AG04449 (cell line): ENCODE measurements at regions of chr12 and their contacts with region 1.

Region 1: DNA sequence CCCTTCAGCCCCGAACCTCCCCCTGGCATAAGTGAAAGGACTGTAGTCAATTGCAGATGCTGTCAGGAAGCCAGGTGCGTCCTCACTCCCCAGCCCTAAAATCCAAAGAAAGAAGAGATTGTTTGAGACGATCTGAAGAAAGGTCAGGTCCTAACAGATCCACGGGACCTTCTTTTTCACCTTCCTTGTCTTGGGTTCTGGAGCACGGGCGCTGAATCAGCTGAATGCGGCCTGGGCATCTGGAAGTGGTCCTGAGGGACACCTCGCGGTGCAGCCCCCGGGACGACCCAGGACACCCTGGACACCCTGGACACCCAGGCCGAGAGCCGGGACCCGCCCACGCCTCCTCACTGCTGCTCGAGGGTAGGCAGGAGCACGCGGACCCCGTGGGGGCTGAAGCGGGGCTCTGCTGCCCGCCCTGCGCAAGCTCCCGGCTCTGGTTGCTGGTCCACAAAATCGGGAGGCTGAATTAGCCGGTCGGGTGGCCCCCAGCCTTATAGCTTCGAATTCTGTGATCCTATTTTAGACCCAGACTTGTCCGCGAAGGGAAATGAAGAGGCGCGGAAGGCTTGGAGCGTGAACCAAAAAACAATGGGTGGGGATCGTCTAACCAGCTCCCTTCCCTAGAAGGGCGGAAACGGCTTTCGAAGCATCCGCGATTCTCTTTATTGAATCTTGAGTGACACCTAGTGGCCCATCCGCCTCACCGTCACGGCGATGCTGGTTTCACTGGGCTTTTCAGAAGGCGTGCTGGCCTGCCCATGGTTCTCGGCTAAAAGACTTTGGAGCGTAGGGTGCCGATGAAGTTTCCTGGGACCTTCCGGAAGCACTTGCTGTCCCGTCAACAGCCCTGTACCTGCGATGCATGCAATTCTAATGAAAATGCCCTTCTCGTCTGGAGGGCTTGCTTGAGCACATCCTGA is 46.4 kb upstream of the PLXNC1 start:
- DNase-seq: no peak
- H3K4me3 ChIP-seq: peak overlapping the region; percentile 68
- CTCF ChIP-seq: peak; percentile 86

Region 2: DNA sequence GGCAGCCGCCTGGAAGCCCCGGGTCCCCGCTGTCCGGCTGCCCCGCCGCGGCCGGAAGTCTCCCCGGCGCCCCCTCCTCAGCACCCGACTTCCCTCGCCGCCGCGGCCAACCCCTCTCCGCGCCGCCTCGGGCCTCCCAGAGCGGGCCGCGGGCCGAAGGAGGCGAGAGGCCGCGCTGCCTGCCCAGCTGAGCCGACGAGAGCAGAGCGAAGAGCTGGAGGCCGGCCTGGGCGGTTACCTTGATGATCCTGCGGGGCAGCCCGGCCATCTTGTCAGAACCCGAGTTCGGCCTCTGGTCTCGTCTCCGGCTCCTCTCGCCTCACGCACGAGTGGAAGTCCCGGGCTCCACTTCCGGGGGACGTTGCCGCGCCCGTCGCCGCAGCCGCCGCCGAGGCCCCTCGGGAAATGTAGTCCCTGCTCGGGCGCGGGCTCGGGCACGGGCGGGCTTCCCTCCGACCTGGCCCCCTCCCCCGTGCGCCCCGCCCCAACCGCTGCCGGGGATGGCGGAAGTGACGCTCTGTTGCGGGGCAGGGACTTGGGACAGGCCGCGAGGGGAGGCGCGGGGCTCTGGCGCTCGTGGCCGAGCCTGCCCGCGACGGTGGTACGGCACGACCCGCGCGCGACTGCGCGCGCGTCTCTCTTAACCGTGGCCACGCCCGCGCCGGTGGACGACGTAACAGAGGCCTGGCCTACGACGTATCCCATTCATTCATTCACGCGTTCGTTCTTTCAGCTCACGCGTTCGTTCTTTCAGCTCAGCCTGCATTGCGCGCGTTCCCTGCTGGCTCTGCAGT is 660.2 kb before region 1 on chr12 and contains the start of gene UBE2N:
- CTCF ChIA-PET with region 1: interaction called, 18 read pairs
- POLR2A ChIA-PET with region 1: no interaction called
- DNase-seq: peak; percentile 47
- H3K4me3 ChIP-seq: peak within 1 kb of the TSS; percentile 79
- CTCF ChIP-seq: no peak

Region 3: GRCh38 chr12:93569656-93570551 is 532.1 kb before region 1 on chr12:
- CTCF ChIA-PET with region 1: interaction called, 199 read pairs
- POLR2A ChIA-PET with region 1: interaction called, 5 read pairs
- DNase-seq: no peak
- H3K4me3 ChIP-seq: peak overlapping the region; percentile 67
- CTCF ChIP-seq: peak; percentile 89

Region 4: DNA sequence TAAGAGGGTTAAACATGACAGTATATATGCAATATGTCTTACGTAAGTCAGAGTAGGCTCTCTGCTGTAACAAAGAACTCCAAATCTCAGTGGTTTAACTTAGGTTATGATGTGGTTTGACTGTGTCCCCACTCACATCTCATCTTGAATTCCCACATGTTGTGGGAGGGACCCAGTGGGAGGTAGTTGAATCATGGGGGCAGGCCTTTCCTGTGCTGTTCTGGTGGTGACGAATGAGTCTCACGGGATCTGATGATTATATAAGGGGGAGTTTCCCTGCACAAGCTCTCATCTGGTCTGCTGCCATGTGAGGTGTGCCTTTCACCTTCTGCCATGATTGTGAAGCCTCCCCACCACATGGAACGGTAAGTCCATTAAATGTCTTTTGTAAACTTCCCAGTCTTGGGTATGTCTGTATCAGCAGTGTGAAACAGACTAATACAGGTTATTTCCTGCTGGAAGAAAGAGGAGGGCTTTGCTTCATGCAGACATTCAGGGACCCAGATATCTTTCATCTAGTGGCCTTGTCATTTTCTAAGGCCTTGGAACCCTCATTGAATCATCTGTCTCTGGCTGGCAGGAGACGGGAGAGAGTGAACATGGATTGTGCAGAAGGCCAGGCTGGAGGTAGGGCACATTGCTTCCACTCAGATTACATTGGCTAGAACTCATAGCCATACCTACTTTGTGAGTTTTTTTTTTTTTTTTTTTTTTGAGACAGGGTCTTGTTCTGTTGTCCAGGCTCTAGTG is 328.7 kb before region 1 on chr12:
- CTCF ChIA-PET with region 1: interaction called, 326 read pairs
- POLR2A ChIA-PET with region 1: no interaction called
- DNase-seq: no peak
- H3K4me3 ChIP-seq: no peak overlapping the region
- CTCF ChIP-seq: no peak

Region 5: DNA sequence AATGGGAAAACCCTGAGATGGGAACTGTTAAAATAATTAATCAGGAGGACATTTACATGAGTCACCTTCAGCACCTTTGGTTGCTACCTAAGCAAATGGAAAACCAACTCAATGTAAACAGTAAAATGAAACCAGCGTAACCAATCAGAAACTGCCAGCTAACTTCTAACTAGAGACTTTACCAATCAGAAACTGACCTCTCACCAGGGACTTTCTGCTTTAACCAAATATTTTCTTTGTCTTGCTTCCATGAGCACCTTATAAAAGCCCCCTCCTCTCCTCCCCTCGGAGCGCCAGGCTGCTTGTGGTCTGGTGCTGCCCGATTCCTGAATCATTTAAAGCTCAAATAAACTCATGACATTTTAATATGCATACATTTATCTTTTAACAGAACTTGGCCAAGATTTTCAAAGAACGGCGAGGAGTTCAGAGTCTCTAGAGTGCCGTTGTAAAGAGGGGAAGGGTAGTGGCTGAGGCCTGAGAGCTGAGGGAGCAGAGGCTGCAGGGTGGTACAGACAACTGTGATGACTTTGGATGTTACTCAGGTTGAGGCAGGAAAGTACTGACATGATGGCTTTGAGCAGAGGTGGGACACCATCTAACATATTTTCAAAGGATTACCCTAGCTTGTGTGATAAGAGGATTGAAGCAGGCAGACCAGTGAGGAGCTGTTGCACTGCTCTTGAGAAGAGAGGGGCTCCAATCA is 241.2 kb before region 1 on chr12:
- CTCF ChIA-PET with region 1: interaction called, 12 read pairs
- POLR2A ChIA-PET with region 1: no interaction called
- DNase-seq: no peak
- H3K4me3 ChIP-seq: no peak overlapping the region
- CTCF ChIP-seq: no peak

Region 6: GRCh38 chr12:93922583-93923006 is 179.4 kb before region 1 on chr12:
- CTCF ChIA-PET with region 1: no interaction called
- POLR2A ChIA-PET with region 1: no interaction called
- DNase-seq: no peak
- H3K4me3 ChIP-seq: no peak overlapping the region
- CTCF ChIP-seq: no peak

Region 7: DNA sequence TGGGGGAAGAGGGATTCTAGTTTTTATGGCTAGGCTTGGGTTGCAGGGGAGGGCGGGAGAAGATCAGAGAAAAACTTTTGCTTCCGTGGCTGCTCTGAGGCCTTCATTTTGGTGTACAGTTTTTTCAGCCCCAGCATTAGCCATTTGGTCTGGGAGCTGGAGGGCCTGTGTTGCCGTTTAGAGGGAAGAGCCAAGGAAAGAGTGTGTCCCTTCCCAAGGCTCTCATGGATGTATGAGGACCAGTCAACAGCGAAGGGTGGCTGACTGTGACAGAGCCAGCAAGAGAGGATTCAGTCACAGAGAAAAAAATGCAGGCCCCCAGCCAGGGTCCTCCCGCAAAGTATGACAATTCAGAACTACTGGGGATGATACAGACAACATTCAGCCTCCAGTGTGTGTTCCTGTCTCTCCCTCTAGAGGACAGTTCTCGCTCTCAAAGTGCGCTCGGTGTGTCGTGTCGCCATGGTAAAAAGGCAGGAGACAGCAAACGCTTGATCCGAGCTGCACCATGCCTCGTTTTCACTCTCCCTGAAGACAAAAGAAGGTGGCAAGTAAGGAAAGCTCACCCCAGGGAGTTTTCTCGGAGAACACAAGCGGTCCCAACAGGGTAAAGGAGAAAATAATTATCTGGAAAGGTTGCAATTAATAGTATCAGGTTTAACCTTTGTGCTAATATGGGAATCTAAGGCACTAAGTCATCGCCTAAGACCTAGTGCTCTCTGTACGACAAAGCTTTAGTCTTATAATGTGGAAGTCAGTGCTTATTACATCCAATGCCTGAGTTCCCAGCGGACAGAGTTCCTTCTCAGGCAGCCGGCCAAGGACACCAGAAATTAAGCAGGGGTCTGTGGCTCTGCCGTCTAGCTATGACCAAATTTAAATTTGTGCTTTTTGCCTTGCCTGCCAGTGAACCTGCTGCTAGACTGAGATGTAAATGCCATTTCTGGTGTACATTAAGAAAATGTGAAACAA is 110.9 kb before region 1 on chr12:
- CTCF ChIA-PET with region 1: interaction called, 19 read pairs
- POLR2A ChIA-PET with region 1: no interaction called
- DNase-seq: no peak
- H3K4me3 ChIP-seq: no peak overlapping the region
- CTCF ChIP-seq: peak; percentile 53

Region 8: GRCh38 chr12:94849411-94849976 is 747.5 kb after region 1 on chr12:
- CTCF ChIA-PET with region 1: no interaction called
- POLR2A ChIA-PET with region 1: no interaction called
- DNase-seq: no peak
- H3K4me3 ChIP-seq: no peak overlapping the region
- CTCF ChIP-seq: no peak